ENCODE measurements at regions of chr2 and their contacts with region 1.

Region 1: DNA sequence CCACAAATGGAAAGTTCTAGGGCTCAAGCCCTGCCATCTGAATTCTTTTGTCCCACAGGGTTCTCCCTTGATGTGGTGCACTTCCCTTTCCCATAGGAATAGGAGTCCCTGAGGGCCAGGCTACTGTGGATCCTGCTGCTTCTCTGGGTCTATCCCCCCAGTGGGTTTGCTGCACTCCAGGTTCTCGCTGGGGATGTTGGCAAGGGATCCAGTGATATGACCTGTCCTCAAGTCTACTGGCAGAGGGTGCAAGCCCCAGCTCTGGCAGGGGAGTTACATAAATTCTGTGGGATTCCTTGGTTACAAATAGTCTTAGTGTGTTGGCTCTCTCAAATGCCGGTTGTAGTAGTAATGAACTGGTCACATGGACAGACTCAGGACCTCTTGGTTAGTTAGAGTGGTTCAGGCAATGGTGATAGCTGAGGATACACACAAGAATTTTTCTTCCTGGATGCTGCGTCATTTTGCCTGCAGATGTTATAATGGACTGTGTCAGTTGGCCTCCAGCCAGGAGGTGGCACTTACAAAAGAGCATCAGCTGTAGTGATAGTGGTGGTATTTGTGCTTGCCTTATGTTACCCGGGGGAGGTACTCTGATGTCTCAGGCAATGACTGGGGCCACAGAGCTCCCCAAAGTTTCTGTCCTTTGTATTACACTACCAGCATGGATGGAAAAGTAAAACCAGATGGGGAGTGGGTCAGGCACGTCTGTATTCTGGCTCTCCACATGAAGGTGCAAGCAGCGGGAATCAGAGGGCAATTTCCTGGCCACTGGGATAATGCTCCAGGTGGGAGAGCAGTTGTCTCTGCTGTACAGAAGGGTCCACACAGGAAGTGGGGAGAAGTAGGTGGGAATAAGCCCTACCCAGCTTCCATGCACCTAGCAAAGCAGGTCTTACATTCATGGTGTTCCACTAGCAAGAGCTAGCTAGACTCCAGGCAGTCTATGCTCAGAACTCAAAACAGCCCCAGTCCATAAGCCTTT is 267.9 kb downstream of the SOX11 start:
- DNase-seq: peak; percentile 74 to 76
- H3K4me3 ChIP-seq: no peak overlapping the region
- H3K27ac ChIP-seq: no peak overlapping the region
- H3K4me1 ChIP-seq: no peaks in the 10 kb centered on the region
- H3K27me3 ChIP-seq: no peaks in the 10 kb centered on the region
- CTCF ChIP-seq: no peak
- POLR2A ChIP-seq: no peak

Region 2: DNA sequence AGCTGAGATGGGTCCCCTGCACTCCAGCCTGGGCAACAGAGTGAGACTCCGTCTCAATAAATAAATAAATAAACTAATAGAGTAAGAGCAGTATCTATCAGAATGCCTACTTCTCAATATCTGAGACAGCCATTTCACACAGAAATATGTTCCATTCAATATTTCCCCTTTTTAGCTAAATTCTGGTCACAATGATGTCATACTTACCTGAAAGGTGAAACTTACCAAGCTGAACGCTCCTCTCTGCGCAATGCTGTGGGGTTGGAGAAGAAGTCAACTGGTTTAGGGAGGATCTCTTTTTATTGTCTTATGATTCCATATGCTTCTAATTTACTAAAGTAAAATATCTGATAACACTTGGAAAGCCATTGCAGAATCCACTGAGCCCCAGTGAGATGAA is 691.1 kb before region 1 on chr2:
- intact Hi-C with region 1: loop called (anchors 5 kb)
- DNase-seq: no peak
- H3K4me3 ChIP-seq: no peak overlapping the region
- H3K27ac ChIP-seq: no peak overlapping the region
- H3K4me1 ChIP-seq: no peaks in the 10 kb centered on the region
- H3K27me3 ChIP-seq: no peaks in the 10 kb centered on the region
- CTCF ChIP-seq: no peak
- POLR2A ChIP-seq: no peak

Region 3: DNA sequence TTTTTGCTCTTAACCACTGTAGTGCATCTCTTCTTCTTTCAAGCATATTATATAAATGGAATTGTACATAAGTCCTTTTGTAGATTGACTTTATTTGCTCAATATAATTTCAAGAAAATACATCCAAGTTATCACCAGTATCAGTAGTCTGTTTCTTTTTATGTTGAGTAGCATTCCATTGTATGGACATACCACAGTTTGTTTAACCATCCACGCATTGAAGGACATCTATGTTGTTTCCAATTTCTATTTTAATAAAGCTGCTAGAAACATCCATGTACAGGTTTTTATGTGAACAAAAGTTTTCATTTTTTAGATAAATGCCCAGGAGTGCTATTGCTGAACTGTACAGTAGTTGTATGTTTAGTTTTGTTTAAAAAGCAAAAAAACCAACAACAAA is 655.5 kb before region 1 on chr2:
- intact Hi-C with region 1: no loop called
- DNase-seq: no peak
- H3K4me3 ChIP-seq: no peak overlapping the region
- H3K27ac ChIP-seq: no peak overlapping the region
- H3K4me1 ChIP-seq: no peaks in the 10 kb centered on the region
- H3K27me3 ChIP-seq: no peaks in the 10 kb centered on the region
- CTCF ChIP-seq: no peak
- POLR2A ChIP-seq: no peak

Region 4: DNA sequence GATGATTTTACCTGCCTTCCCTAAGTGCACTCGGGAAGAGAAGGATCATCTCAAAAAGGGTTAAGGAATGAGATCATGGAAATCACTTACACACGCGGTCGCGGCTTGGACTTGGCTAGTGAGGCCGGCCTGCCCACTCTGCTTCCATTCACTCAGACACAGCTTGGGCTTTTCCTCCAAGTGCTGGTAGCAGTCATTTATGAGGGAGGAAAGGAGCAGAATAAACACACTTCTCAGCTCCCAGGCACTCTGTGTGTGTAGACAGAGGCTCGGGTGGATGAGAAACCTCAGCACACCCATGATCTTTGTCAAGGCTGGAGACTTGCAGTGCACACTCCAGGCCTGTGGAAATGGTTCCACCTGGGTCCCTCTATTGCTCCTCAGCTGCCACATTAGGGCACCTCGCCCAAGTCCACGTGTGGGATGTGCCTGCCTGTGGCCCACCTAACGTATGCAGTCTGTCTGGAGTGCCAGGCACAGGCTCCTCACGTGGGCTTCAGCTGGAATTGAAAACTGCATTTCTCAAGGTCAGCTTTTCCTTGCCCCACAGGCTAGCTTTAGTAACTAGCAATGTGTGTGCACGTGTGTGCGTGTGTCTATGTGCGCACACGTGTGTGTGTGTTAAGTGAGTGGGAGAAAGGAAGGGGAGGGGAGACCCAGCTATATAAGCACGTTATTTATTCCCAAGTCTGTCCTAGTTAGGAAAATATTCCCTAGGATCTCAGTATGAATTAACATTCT is 20.5 kb after region 1 on chr2:
- intact Hi-C with region 1: no loop called
- DNase-seq: no peak
- H3K4me3 ChIP-seq: no peak overlapping the region
- H3K27ac ChIP-seq: no peak overlapping the region
- H3K4me1 ChIP-seq: no peaks in the 10 kb centered on the region
- H3K27me3 ChIP-seq: no peaks in the 10 kb centered on the region
- CTCF ChIP-seq: no peak
- POLR2A ChIP-seq: no peak

Region 5: DNA sequence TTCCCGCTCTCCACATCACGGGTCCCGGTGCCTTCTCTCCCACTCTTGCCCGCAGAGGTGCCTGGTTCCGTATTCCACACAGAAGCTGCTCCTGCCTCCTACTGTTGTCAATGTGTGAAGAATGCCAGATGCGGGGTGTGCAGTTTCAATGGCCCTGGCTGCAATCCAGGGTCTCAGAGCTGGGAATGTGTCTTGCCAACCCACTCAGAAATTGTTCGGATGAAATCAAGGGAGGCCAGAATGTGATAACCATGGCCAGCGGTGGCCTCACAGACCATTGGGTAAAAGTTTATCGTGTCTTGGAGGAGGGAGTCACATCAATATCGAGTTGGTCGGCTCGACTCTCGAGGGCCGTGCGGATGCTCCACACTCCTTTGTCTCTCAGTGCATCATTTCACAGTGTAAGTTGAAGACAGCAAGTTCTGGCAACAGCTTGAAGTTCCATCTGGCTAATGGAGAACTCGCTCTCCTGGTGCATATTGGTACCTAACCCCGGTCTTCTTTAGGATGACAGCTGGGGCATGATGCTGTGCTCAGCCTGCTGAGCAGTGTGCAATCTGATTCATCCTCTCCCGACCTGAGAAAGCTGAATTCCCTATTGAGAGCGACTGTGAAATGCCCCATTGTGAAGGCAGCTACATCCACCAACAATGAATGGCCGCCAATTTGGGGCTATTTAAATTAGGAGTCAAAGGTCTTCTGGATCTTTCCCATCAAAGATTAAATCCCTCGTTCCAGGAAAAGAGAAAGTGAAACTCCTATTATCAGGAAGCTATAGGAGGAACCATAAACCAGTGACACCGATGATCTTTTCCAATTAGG is 121.0 kb after region 1 on chr2:
- intact Hi-C with region 1: no loop called
- DNase-seq: no peak
- H3K4me3 ChIP-seq: no peak overlapping the region
- H3K27ac ChIP-seq: no peak overlapping the region
- H3K4me1 ChIP-seq: no peaks in the 10 kb centered on the region
- H3K27me3 ChIP-seq: no peaks in the 10 kb centered on the region
- CTCF ChIP-seq: no peak
- POLR2A ChIP-seq: no peak